Mammary epithelial cell (primary cell): ENCODE measurements at regions of chr14 and their contacts with region 1.

Region 1: GRCh38 chr14:64681796-64682710 is 22.2 kb upstream of the PLEKHG3 start:
- DNase-seq: peak; percentile 87
- H3K4me3 ChIP-seq: no peak overlapping the region
- H3K27ac ChIP-seq: peak overlapping the region; percentile 94
- H3K4me1 ChIP-seq: peaks cover 45% of the 10 kb centered on the region
- H3K27me3 ChIP-seq: no peaks in the 10 kb centered on the region
- CTCF ChIP-seq: peak; percentile 26 to 58

Region 2: GRCh38 chr14:64540208-64541157 is 141.6 kb before region 1 on chr14 and contains the start of gene HSPA2:
- CTCF ChIA-PET with region 1: no interaction called
- dilution Hi-C with region 1: no loop called
- in situ Hi-C with region 1: no loop called
- intact Hi-C with region 1: no loop called
- DNase-seq: peak; percentile 100
- H3K4me3 ChIP-seq: peak within 1 kb of the TSS; percentile 46 to 59 (median 58)
- H3K27ac ChIP-seq: peak within 1 kb of the TSS; percentile 40
- H3K4me1 ChIP-seq: peaks cover 4% of the 10 kb centered on the region
- H3K27me3 ChIP-seq: peaks cover 10% of the 10 kb centered on the region
- CTCF ChIP-seq: peak; percentile 61 to 89
- total RNA-seq, gene HSPA2: 4.3 to 4.7 TPM

Region 3: GRCh38 chr14:64702493-64703394 is 20.7 kb after region 1 on chr14:
- CTCF ChIA-PET with region 1: no interaction called
- dilution Hi-C with region 1: no loop called
- in situ Hi-C with region 1: no loop called
- intact Hi-C with region 1: loop called (anchors 1 kb)
- DNase-seq: peak; percentile 83
- H3K4me3 ChIP-seq: peak overlapping the region; percentile 82 to 92 (median 91)
- H3K27ac ChIP-seq: peak overlapping the region; percentile 80
- H3K4me1 ChIP-seq: peaks cover 44% of the 10 kb centered on the region
- H3K27me3 ChIP-seq: no peaks in the 10 kb centered on the region
- CTCF ChIP-seq: no peak

Region 4: GRCh38 chr14:64708148-64709004 is 26.3 kb after region 1 on chr14:
- CTCF ChIA-PET with region 1: no interaction called
- dilution Hi-C with region 1: no loop called
- in situ Hi-C with region 1: no loop called
- intact Hi-C with region 1: loop called (anchors 1 kb)
- DNase-seq: peak; percentile 89
- H3K4me3 ChIP-seq: peak overlapping the region; percentile 23 to 39 (median 31)
- H3K27ac ChIP-seq: peak overlapping the region; percentile 86
- H3K4me1 ChIP-seq: peaks cover 47% of the 10 kb centered on the region
- H3K27me3 ChIP-seq: no peaks in the 10 kb centered on the region
- CTCF ChIP-seq: no peak

Region 5: DNA sequence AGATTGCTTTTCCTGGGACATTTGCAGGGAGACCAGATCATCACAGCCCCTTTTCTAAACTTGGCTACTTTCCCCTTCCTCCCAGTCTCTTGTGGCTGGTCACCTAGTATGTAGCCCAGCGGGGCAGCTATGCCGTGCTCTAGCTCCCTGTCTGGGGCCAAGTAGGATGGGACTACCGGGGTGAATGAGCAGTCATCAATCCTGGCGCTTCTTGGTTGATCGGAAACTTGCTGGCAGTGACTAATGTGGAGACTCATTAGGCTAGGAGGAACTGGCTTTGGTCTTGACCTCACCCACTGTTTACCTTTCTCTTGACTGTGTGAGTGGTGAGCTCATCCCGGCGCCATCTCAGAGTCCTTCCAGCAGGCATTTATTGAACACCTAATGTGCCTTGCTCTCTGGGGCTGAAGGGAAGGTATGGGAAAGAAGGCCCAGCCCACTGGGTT is 38.1 kb after region 1 on chr14:
- CTCF ChIA-PET with region 1: interaction called, 3 read pairs
- dilution Hi-C with region 1: no loop called
- in situ Hi-C with region 1: no loop called
- intact Hi-C with region 1: loop called (anchors 1 kb)
- DNase-seq: peak; percentile 98
- H3K4me3 ChIP-seq: no peak overlapping the region
- H3K27ac ChIP-seq: peak overlapping the region; percentile 89
- H3K4me1 ChIP-seq: peaks cover 98% of the 10 kb centered on the region
- H3K27me3 ChIP-seq: no peaks in the 10 kb centered on the region
- CTCF ChIP-seq: no peak

Region 6: DNA sequence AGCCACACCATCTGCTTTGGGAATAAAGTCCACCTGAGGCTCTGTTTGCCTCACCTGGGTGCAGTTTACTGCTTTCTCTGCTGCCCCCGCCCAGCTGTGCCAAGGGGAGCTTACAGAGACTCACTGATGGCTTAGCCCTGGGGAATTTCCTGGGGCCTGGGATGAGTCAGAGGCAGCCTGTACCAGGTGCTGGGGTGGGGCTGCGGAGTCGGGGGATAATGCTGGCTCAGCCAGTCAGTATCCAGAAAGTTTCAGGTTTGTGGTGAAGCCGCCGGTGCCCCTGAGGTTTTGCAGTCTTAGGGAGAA is 44.5 kb after region 1 on chr14:
- CTCF ChIA-PET with region 1: no interaction called
- dilution Hi-C with region 1: no loop called
- in situ Hi-C with region 1: no loop called
- intact Hi-C with region 1: loop called (anchors 2 kb)
- DNase-seq: peak; percentile 99
- H3K4me3 ChIP-seq: no peak overlapping the region
- H3K27ac ChIP-seq: peak overlapping the region; percentile 89
- H3K4me1 ChIP-seq: peaks cover 61% of the 10 kb centered on the region
- H3K27me3 ChIP-seq: no peaks in the 10 kb centered on the region
- CTCF ChIP-seq: no peak

Region 7: DNA sequence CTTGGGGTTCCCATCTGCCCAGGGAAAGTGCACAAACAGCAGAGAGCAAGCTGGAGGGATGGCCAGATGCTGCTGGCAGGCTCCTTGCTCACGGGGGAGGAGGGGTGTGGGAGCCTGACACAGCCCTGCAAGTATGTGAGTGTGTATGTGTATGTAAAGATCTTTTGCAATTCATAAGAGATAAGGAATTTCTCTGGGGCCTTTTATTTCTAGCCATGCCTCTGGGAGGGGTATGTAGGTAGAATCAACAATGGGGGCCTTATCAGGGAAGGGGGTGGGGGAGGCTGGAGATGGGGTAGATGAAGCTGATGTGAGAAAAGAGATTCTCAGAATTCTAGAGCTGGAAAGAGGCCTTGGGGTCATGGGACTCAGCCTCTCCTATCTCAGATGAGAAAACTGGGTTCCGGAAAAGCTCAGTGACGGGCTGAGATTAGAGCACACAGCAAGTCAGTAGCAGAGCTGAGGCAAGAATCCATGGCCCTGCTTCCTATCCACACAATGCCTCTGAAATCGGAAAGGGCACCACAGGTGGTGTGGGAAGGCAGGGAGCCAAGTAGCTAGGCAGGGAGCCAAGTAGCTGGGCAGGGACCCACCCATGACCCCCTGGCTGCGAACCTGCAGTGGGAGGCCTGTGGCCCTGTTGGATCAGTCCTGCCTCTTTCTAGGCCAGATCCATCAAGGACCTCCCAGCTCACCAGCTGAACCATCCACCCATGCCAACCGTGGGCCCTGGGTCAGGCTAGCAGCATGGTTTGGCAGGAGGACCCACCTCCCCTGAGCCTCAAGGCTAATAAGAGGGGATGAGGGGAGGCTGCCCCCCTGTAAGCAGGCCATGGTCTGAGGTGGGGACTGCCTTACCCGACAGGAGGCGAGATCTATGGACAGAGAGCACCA is 76.9 kb after region 1 on chr14:
- CTCF ChIA-PET with region 1: no interaction called
- dilution Hi-C with region 1: no loop called
- in situ Hi-C with region 1: no loop called
- intact Hi-C with region 1: loop called (anchors 2 kb)
- DNase-seq: peak; percentile 82
- H3K4me3 ChIP-seq: no peak overlapping the region
- H3K27ac ChIP-seq: peak overlapping the region; percentile 68
- H3K4me1 ChIP-seq: peaks cover 78% of the 10 kb centered on the region
- H3K27me3 ChIP-seq: no peaks in the 10 kb centered on the region
- CTCF ChIP-seq: no peak